ENCODE measurements at regions of chr9 and their contacts with region 1.

Region 1: DNA sequence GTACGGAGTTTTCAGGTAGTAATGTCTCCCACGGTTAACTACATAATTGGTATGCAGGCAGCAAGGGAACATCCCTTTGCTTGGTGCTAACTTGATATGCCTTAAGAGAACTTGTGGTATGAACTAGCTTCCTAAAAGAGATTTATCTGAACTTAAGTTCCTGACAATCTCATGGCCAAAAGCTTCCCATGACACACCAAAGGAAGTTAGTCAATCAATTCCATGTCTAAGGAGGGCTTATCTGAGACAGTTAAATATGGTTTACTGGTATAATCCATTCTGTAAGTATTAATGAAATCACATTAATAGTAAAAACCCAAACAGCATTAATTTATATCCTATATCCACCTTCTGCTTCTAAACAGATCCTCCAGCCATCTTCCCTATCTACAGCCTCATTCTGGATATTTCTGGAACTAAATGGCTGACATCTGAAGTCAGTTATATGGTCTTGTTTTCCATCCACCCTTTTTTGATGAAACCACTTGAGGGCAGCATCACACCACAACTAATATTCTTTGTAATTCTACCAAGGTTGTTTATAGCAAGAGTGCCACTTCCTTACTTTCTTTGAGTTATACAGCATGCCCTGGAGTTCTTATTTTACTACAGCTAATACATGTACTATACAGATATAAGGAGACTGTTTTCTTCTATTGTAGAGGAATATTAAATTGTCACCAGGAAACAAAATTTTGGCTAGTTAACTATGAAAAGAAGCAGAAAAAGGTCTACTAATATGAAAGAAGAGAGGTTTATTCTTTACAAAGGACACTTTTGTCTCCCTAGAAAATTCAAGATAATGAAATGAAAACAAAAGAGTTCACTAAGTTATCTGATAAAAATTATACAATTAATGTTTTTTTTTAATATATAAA is 34.7 kb downstream of the SHOC1 start:
- DNase-seq: no peak
- H3K4me3 ChIP-seq: no peak overlapping the region
- H3K27ac ChIP-seq: no peak overlapping the region
- H3K4me1 ChIP-seq: peaks cover 6% of the 10 kb centered on the region
- H3K27me3 ChIP-seq: no peaks in the 10 kb centered on the region
- CTCF ChIP-seq: peak; percentile 79

Region 2: DNA sequence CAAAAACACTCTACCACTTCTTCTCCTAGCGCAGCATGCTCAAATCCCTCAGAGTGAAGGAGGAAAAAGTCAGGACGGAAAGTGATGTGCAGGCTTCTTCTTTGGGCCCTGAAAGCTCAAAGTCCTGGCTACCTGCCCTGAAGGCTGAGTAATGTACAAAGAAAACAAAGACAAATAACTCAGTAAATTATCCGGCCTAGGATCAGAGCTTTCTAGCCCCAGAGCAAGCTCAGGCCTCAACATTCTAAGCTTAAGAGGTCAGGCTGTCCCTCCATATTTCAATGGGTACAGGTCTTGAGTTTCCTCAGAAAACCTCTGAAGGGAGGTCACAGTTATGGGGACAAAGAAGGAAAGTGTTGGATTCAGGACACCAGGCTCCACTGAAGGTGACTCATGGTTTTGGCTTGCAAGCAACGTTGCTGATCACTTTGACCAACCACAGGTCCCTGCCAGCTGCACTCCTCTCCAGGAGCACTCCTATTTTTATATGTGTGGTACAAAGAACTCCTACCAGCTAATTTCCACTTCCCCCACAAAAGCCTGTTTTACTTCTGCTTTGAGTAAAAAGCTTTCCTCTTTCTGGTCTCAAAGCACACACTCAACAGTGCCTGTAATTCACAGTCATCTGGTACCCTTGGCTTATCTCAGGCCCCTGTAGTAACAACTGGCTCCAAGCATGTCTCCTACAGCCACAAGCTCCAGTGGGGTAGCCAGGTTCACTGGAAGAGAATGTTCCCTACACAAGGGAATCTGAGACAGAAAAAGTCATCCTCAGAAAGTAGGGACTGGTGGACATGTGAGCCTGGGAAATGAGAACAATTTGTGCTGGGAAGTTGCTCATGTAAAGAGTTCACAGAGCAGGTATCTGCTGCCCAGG is 252.3 kb after region 1 on chr9:
- intact Hi-C with region 1: no loop called
- DNase-seq: peak; percentile 28
- H3K4me3 ChIP-seq: no peak overlapping the region
- H3K27ac ChIP-seq: peak overlapping the region; percentile 71
- H3K4me1 ChIP-seq: peaks cover 21% of the 10 kb centered on the region
- H3K27me3 ChIP-seq: no peaks in the 10 kb centered on the region
- CTCF ChIP-seq: no peak

Region 3: GRCh38 chr9:112074250-112075008 is 314.4 kb after region 1 on chr9:
- intact Hi-C with region 1: loop called (anchors 2 kb)
- DNase-seq: peak; percentile 28
- H3K4me3 ChIP-seq: peak overlapping the region; percentile 32
- H3K27ac ChIP-seq: peak overlapping the region; percentile 76
- H3K4me1 ChIP-seq: peaks cover 50% of the 10 kb centered on the region
- H3K27me3 ChIP-seq: no peaks in the 10 kb centered on the region
- CTCF ChIP-seq: peak; percentile 95

Region 4: GRCh38 chr9:112361601-112362000 is 601.6 kb after region 1 on chr9:
- intact Hi-C with region 1: loop called (anchors 5 kb)
- DNase-seq: no peak
- H3K4me3 ChIP-seq: no peak overlapping the region
- H3K27ac ChIP-seq: no peak overlapping the region
- H3K4me1 ChIP-seq: no peaks in the 10 kb centered on the region
- H3K27me3 ChIP-seq: no peaks in the 10 kb centered on the region
- CTCF ChIP-seq: peak; percentile 67